ENCODE measurements at regions of chr11 and their contacts with region 1.

Region 1: GRCh38 chr11:6389921-6390724 is at the start of gene SMPD1:
- DNase-seq: peak; percentile 92 to 93
- H3K4me3 ChIP-seq: peak within 1 kb of the TSS; percentile 80
- H3K4me3 Mint-ChIP-seq: peak within 1 kb of the TSS; percentile 68
- H3K27ac Mint-ChIP-seq: peak within 1 kb of the TSS; percentile 27
- H3K4me1 ChIP-seq: peaks cover 24% of the 10 kb centered on the region
- H3K4me1 Mint-ChIP-seq: peaks cover 33% of the 10 kb centered on the region
- H3K27me3 ChIP-seq: no peaks in the 10 kb centered on the region
- H3K27me3 Mint-ChIP-seq: no peaks in the 10 kb centered on the region
- CTCF ChIP-seq: no peak
- total RNA-seq, gene SMPD1: 38.6 and 41.9 TPM in 2 replicates

Region 2: GRCh38 chr11:6333112-6333511 is 57.0 kb before region 1 on chr11:
- CTCF ChIA-PET with region 1: no interaction called
- POLR2A ChIA-PET with region 1: no interaction called
- intact Hi-C with region 1: no loop called
- DNase-seq: no peak
- H3K4me3 ChIP-seq: no peak overlapping the region
- H3K4me3 Mint-ChIP-seq: no peak overlapping the region
- H3K27ac Mint-ChIP-seq: no peak overlapping the region
- H3K4me1 ChIP-seq: no peaks in the 10 kb centered on the region
- H3K4me1 Mint-ChIP-seq: no peaks in the 10 kb centered on the region
- H3K27me3 ChIP-seq: no peaks in the 10 kb centered on the region
- H3K27me3 Mint-ChIP-seq: peaks cover 2% of the 10 kb centered on the region
- CTCF ChIP-seq: no peak

Region 3: DNA sequence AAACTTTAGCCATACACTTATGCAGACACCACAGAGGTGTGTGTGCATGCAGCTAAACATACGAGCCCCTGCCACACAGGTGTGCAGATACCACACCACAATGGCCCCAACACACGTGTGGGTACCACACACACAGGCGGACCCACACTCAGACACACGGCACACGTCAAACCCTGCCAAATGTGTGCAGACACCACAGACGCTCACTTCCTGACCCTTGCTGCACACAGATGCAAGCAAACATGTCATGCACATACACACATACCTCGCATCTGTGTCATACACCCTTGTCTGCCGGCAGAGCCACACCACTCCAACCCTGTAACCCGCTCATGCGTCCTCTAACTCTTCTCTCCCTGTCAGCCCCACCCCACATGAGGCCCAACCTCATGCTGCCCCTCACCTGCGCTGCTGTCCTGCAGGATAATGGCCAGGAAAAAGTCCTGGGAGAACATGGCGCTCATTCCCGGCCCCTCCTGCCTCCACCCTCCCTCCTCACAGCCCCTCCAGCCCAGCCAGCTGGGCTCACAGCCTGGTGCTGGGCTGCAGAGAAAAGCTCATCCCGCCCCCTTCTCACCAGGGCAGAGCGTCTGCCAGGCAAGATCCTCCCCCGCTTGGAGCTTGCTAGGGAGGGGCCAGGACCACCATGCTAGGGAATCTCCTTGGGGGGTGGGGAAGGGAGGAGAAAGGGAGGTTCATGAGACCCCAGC is 14.4 kb after region 1 on chr11:
- CTCF ChIA-PET with region 1: interaction called, 4 read pairs
- POLR2A ChIA-PET with region 1: no interaction called
- intact Hi-C with region 1: loop called (anchors 1 kb)
- DNase-seq: no peak
- H3K4me3 ChIP-seq: no peak overlapping the region
- H3K4me3 Mint-ChIP-seq: no peak overlapping the region
- H3K27ac Mint-ChIP-seq: peak overlapping the region; percentile 49
- H3K4me1 ChIP-seq: peaks cover 43% of the 10 kb centered on the region
- H3K4me1 Mint-ChIP-seq: peaks cover 44% of the 10 kb centered on the region
- H3K27me3 ChIP-seq: no peaks in the 10 kb centered on the region
- H3K27me3 Mint-ChIP-seq: no peaks in the 10 kb centered on the region
- CTCF ChIP-seq: no peak

Region 4: GRCh38 chr11:6431861-6432260 is 41.7 kb after region 1 on chr11:
- CTCF ChIA-PET with region 1: interaction called, 4 read pairs
- POLR2A ChIA-PET with region 1: interaction called, 4 read pairs
- intact Hi-C with region 1: loop called (anchors 2 kb)
- DNase-seq: no peak
- H3K4me3 ChIP-seq: no peak overlapping the region
- H3K4me3 Mint-ChIP-seq: no peak overlapping the region
- H3K27ac Mint-ChIP-seq: no peak overlapping the region
- H3K4me1 ChIP-seq: peaks cover 20% of the 10 kb centered on the region
- H3K4me1 Mint-ChIP-seq: peaks cover 31% of the 10 kb centered on the region
- H3K27me3 ChIP-seq: no peaks in the 10 kb centered on the region
- H3K27me3 Mint-ChIP-seq: no peaks in the 10 kb centered on the region
- CTCF ChIP-seq: no peak

Region 5: DNA sequence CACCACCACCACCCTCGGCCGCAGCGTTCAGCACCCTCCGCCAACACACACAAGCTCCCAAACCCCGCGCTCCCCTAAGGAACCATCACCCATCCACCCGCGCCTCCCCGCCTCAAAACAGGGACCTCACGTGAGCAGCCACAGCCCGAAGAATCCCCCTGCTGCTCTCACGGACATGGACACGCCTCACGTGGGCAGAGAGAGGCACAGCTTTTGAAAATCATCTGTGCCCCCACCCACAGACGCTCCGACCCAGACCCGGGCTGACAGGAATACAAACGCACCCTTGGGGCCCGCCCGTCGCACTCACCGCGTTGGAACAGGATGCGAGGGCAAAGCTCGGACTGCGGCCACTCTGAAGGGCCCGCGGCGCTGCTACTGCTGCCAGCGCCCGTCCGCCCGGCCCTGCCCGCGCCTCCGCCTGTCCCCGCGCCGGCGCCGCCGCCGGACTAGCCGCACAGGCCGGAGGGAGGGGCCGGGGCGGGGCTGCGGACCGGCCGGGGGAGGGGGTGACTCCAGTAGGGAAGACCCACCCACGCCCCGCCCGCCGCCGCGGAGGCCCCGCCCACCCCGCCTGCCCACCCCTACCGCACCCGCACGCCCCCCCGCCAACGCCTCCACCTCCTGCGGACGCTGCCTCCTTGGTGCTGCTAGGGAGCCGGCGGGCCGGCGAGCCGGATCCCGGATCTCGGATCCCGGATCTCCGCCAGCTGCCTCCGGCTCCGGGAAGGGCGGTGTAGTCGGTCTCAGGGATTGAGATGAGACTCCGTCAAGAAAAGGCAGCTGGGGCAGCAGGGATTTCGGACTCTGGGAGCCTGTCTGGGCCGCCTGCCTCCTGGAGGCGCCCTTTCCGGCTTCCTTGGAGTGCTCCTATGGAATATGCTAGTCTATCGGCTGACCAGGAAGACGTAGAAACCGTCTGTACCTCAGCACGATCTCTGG is 83.6 kb after region 1 on chr11 and contains the start of gene TRIM3:
- CTCF ChIA-PET with region 1: no interaction called
- POLR2A ChIA-PET with region 1: interaction called, 10 read pairs
- intact Hi-C with region 1: loop called (anchors 2 kb)
- DNase-seq: peak; percentile 92 to 94
- H3K4me3 ChIP-seq: peak within 1 kb of the TSS; percentile 65
- H3K4me3 Mint-ChIP-seq: peak within 1 kb of the TSS; percentile 84
- H3K27ac Mint-ChIP-seq: peak within 1 kb of the TSS; percentile 96
- H3K4me1 ChIP-seq: peaks cover 30% of the 10 kb centered on the region
- H3K4me1 Mint-ChIP-seq: peaks cover 29% of the 10 kb centered on the region
- H3K27me3 ChIP-seq: no peaks in the 10 kb centered on the region
- H3K27me3 Mint-ChIP-seq: no peaks in the 10 kb centered on the region
- CTCF ChIP-seq: peak in 1 of 2 experiments; percentile 39
- total RNA-seq, gene TRIM3: 28.0 and 33.4 TPM in 2 replicates

Region 6: DNA sequence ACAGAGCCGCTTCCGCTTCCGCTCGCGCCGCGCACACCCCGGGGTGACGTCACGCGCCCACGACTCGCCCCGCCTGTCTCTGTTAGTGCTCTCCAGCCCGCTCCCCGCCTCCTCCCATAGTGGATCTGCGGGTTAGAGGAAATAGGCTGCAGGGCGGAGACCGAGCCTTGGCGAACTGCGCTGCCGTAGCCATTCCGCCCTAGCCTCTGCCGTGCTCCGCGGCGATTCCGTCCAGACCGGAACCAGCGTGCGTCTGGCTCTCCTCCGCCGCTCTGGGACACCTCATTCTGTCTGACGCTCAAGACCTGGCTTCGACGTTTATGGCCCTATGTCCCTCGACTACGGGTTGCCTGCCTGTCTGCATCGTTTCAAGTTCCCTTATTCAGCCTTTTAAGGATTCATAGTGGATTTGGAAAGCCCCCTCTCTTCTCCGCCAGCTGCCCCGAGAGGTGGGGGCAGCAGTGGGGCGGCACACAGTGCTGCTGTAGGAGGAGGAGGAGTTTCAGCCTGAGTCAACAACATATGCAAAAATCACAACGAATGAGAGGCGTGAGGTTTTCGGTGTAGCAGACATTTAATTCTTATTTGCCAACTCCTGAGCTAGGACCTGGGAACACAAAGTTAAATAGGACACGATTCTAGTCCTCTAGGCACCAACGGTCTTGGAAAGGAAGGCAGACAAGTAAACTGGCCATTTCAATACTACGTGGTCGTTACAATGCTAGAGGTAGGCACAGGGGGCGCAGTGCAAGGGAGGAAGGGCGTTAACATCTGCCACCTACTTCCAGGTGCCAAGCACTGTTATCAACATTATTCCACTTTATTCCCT is 222.3 kb after region 1 on chr11 and contains the start of gene TAF10:
- CTCF ChIA-PET with region 1: no interaction called
- POLR2A ChIA-PET with region 1: no interaction called
- intact Hi-C with region 1: loop called (anchors 10 kb)
- DNase-seq: peak; percentile 97
- H3K4me3 ChIP-seq: peak within 1 kb of the TSS; percentile 78
- H3K4me3 Mint-ChIP-seq: no peak within 1 kb of the TSS
- H3K27ac Mint-ChIP-seq: no peak within 1 kb of the TSS
- H3K4me1 ChIP-seq: peaks cover 17% of the 10 kb centered on the region
- H3K4me1 Mint-ChIP-seq: peaks cover 4% of the 10 kb centered on the region
- H3K27me3 ChIP-seq: no peaks in the 10 kb centered on the region
- H3K27me3 Mint-ChIP-seq: no peaks in the 10 kb centered on the region
- CTCF ChIP-seq: peak; percentile 39 to 57
- total RNA-seq, gene TAF10: 142 and 143 TPM in 2 replicates

Measured in Caco-2 (cell line).